Lower leg skin (tissue), 4 donors: ENCODE measurements at regions of chr3 and their contacts with region 1.

Region 1: DNA sequence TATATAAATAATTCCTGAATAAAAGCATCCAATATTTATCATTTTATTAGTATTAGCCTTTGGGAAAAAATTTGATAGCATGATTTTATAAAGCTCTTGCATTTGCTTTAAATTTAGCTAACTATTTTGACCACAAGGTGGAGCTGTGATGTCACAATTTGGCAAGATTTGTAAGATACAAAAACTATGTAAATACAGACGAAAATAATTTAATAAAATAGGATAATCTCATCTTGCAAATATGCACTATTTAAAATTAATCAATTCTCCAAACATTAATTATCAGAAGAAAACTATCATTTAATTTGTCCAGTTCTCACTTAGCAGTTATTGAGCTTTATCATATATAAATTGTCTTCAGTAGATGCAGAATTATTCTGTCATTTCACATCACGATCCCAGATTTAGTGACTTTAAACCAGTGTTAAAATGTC is 95.4 kb downstream of the PLOD2 start:
- DNase-seq: no peak
- H3K4me3 ChIP-seq: no peak overlapping the region
- CTCF ChIP-seq: no peak
- POLR2A ChIP-seq: no peak

Region 2: GRCh38 chr3:146189519-146190173 is 124.1 kb after region 1 on chr3:
- intact Hi-C with region 1: loop called (anchors 5 kb)
- DNase-seq: no peak
- H3K4me3 ChIP-seq: no peak overlapping the region
- CTCF ChIP-seq: peak in 1 of 3 donors; percentile 45
- POLR2A ChIP-seq: no peak